Right ventricle myocardium superior (tissue), 1 donor: ENCODE measurements at regions of chr11 and their contacts with region 1.

Region 1: DNA sequence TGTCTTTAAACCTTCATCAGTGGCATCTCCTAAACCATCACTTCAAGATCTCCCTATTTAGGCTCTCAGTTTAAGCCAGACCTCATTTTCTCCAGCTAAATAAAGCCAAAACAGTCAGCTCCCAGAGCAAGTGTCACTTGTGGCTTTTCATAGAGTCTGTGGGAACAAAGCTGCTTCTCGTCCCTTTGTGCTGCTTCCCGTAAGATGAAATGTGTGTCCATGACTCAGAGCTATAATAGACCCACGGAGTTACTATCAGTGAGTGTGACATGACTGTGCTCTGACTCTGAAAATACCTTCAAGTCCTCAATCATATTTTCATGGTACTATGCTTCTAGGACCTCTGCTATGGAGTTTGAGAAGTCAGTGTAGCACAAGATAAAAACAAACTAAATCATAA is 57.3 kb upstream of the SLN start:
- DNase-seq: no peak
- ATAC-seq: no peak

Region 2: DNA sequence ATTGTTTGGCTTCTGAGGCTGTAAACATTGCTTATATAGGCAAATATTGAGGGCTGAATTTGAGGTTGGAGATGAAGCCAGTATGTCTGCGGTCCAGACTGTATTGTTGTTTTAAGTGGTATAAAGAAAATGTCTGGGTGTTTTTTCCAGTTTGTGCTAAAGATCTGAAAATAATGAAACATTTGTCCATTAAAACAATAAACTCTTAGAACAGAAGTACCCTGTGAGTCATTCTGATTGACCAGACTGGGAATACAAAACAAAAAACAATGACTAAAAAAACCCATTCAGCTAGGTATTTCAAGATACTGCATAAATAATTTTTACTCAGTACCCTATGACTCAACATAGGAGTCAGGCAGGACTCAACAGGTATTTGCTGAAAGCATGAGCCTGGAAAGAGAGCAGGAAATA is 224.1 kb before region 1 on chr11:
- intact Hi-C with region 1: no loop called
- DNase-seq: no peak
- ATAC-seq: no peak

Region 3: DNA sequence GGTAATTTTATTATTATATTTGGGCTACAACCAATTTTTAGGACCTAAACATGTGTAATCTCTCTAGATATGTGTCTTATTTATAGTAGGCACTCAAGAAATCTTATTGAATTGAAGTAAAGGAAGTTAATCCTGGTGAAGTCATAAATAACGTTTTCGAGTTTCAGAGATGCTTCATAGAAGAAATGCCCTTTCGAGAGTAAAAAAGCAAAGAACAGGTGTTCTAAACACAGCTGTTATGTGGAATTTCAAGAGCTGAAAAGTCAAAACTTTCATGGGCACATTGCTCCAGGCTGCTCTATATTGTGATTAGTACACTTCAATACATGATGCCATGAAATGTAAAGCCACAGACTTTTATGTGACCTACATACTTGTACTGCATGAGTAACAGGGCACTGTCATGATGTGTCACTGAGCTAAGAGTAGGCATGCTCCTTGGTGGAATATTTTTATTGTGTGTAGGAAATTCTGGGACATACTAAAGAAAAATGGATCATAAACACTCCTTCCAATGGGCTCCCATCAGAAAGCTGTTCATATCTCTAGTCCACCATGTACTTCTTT is 185.5 kb before region 1 on chr11:
- intact Hi-C with region 1: loop called (anchors 10 kb)
- DNase-seq: no peak
- ATAC-seq: no peak